ENCODE measurements at regions of chr15 and their contacts with region 1.

Region 1: GRCh38 chr15:68426116-68426515 is 5.8 kb downstream of the ITGA11 start:
- DNase-seq: no peak
- ATAC-seq: no peak
- H3K4me3 Mint-ChIP-seq: no peak overlapping the region
- H3K27ac Mint-ChIP-seq: no peak overlapping the region
- H3K4me1 Mint-ChIP-seq: no peaks in the 10 kb centered on the region
- H3K27me3 Mint-ChIP-seq: peaks cover 23% of the 10 kb centered on the region
- CTCF ChIP-seq: no peak

Region 2: DNA sequence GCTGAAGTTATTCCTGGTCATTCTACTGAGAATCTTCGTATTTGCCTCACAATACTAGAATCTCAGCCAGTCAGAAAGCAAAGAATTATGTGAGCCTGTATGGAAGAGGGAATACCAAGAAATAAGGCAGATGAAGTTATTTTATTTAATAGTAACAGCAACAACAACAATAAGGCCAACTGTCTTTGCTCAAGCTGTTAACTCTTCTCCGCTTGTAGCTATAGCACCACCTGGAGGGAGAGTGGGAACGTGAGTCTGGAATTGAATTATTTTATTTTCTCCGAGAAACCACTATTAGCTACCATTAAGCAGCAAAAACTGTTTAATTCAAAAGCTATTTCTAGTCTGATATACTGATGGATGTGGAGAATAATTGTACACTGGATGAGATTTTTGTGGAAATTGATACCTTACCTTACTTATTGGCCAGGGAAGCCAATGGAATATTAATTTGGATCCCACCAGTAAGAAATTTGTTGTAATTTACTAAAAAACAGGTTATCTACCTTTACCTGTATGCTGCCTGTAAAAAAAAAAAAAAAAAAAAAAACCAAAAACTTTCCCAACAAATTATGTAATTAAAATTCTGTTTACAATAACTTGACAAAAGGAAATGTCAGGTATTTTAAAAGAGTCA is 271.1 kb before region 1 on chr15:
- CTCF ChIA-PET with region 1: no interaction called
- POLR2A ChIA-PET with region 1: interaction called, 11 read pairs
- intact Hi-C with region 1: no loop called
- DNase-seq: no peak
- ATAC-seq: no peak
- H3K4me3 Mint-ChIP-seq: no peak overlapping the region
- H3K27ac Mint-ChIP-seq: no peak overlapping the region
- H3K4me1 Mint-ChIP-seq: no peaks in the 10 kb centered on the region
- H3K27me3 Mint-ChIP-seq: no peaks in the 10 kb centered on the region
- CTCF ChIP-seq: no peak

Region 3: DNA sequence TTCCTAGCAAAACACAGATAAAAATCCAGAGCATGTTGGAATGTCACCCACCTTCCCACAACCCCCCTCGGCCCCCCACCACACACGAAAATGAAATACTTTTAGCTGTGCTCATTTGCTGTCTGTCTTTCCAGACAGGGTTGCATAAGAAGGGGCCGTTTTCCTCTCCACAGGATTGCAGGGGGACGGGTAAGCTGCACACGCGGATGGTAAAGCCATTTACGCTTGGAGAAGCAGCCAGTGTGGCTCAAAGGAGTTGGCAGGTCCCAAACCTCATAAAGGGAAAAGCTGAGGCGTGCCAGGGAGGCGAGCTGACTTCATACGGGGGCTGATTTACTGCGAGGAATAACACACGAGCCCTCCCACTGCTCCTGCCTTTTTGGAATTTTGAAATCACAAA is 53.3 kb after region 1 on chr15:
- CTCF ChIA-PET with region 1: no interaction called
- POLR2A ChIA-PET with region 1: no interaction called
- intact Hi-C with region 1: no loop called
- DNase-seq: no peak
- ATAC-seq: no peak
- H3K4me3 Mint-ChIP-seq: no peak overlapping the region
- H3K27ac Mint-ChIP-seq: no peak overlapping the region
- H3K4me1 Mint-ChIP-seq: no peaks in the 10 kb centered on the region
- H3K27me3 Mint-ChIP-seq: peaks cover 25% of the 10 kb centered on the region
- CTCF ChIP-seq: no peak